Dendritic cell treated with granulocyte-macrophage colony-stimulating factor and Interleukin-4, amounts not matched to agents 40 ng/mL and 50 ng/mL, for 4 days (primary cell): ENCODE measurements at regions of chr9 and their contacts with region 1.

Region 1: GRCh38 chr9:74554751-74555419 is 57.8 kb downstream of the RORB start:
- H3K4me3 Mint-ChIP-seq: no peak overlapping the region
- H3K27ac Mint-ChIP-seq: no peak overlapping the region
- H3K4me1 Mint-ChIP-seq: peaks cover 20% of the 10 kb centered on the region
- H3K27me3 Mint-ChIP-seq: peaks cover 4% of the 10 kb centered on the region

Region 2: DNA sequence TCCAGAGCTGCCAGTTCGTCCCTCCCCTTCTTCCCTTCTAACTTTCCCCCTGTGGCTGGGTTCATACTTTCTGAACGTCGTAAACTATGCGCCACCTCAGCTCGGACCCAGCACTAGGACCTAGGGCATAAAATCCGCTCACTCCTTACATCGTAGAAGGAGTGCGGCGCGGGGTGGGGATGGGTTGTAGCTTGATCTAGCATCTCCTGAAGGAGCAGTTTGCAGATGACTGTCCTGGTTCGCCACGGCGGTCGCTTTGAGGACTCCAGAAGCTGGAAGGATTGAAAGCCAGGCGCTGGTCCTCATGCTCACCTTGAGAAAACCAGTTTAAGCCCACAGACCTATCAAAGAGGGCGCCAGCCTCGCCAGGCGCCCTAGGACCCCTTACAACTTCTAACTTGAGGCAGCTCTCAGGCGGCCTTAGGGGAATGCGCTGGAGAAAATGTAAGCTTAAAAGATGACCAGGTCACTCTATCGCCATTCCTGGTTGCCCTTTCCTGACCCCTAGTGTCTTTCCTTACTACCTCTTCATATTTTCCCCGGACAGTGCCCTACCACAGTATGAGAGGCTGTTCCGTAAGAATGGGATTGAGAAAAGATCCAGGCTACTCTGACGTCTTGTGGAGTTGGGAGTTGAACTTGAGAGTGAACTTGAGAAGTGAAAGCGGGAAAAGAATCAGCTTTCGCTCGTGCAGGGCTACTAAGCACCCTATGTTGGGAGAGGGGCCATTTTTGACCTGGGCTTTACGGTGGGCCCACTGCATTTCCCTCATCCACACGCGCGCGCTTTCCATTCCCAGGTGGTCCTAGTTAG is 54.9 kb before region 1 on chr9:
- intact Hi-C with region 1: loop called (anchors 5 kb)
- H3K4me3 Mint-ChIP-seq: no peak overlapping the region
- H3K27ac Mint-ChIP-seq: no peak overlapping the region
- H3K4me1 Mint-ChIP-seq: peaks cover 43% of the 10 kb centered on the region
- H3K27me3 Mint-ChIP-seq: peaks cover 59% of the 10 kb centered on the region

Region 3: GRCh38 chr9:75699017-75699416 is 1144.1 kb after region 1 on chr9:
- intact Hi-C with region 1: no loop called
- H3K4me3 Mint-ChIP-seq: no peak overlapping the region
- H3K27ac Mint-ChIP-seq: no peak overlapping the region
- H3K4me1 Mint-ChIP-seq: no peaks in the 10 kb centered on the region
- H3K27me3 Mint-ChIP-seq: no peaks in the 10 kb centered on the region